Endothelial cell of umbilical vein (primary cell): ENCODE measurements at regions of chr5 and their contacts with region 1.

Region 1: DNA sequence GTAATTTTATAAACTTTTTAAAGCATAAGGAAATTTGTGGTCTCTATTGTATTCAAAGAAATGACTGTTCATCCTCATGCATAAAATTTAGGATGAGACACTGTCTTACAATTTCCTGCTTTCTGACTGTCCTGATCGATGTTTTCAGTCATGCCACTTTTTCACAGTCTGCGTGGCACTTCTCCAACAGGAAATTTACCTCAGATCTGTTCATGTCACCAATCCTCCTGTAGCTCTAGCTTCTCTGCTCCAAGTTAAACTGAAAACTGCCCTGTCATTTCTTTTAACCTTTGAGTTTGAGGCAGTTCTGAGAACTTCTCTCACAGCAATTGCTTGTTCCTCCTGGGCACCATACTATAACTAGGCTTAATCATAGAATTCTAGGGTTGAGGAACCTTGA is 455.1 kb downstream of the EFNA5 start:
- DNase-seq: peak; percentile 48
- H3K4me3 ChIP-seq: no peak overlapping the region
- H3K27ac ChIP-seq: peak overlapping the region; percentile 50
- H3K4me1 ChIP-seq: peaks cover 21% of the 10 kb centered on the region
- H3K27me3 ChIP-seq: no peaks in the 10 kb centered on the region
- CTCF ChIP-seq: no peak
- POLR2A ChIP-seq: no peak

Region 2: DNA sequence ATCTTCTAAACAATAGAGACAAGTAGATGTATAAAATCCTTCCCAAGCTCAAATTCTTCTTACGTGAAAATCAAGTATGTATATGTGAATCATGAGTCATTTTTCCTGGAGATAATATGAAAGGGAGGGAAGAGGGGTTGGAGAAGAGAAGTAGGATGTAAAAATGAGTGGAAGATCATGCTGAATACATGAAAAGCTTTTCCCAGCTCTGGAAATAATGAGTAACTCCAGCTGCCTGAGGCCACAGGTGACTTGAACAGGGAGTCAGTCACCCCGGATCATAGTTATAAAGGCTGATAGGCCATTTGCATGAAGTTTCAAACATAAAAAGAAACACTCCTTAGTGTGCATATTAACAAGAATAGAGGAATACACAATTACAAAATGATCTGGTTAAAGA is 31.5 kb before region 1 on chr5:
- CTCF ChIA-PET with region 1: no interaction called
- POLR2A ChIA-PET with region 1: no interaction called
- dilution Hi-C with region 1: no loop called
- intact Hi-C with region 1: loop called (anchors 2 kb)
- DNase-seq: peak; percentile 29
- H3K4me3 ChIP-seq: no peak overlapping the region
- H3K27ac ChIP-seq: no peak overlapping the region
- H3K4me1 ChIP-seq: no peaks in the 10 kb centered on the region
- H3K27me3 ChIP-seq: no peaks in the 10 kb centered on the region
- CTCF ChIP-seq: no peak
- POLR2A ChIP-seq: no peak

Region 3: GRCh38 chr5:107257885-107258520 is 42.4 kb after region 1 on chr5:
- CTCF ChIA-PET with region 1: no interaction called
- POLR2A ChIA-PET with region 1: no interaction called
- dilution Hi-C with region 1: no loop called
- intact Hi-C with region 1: no loop called
- DNase-seq: no peak
- H3K4me3 ChIP-seq: no peak overlapping the region
- H3K27ac ChIP-seq: no peak overlapping the region
- H3K4me1 ChIP-seq: no peaks in the 10 kb centered on the region
- H3K27me3 ChIP-seq: no peaks in the 10 kb centered on the region
- CTCF ChIP-seq: no peak
- POLR2A ChIP-seq: no peak